ENCODE measurements at regions of chr21 and their contacts with region 1.

Region 1: DNA sequence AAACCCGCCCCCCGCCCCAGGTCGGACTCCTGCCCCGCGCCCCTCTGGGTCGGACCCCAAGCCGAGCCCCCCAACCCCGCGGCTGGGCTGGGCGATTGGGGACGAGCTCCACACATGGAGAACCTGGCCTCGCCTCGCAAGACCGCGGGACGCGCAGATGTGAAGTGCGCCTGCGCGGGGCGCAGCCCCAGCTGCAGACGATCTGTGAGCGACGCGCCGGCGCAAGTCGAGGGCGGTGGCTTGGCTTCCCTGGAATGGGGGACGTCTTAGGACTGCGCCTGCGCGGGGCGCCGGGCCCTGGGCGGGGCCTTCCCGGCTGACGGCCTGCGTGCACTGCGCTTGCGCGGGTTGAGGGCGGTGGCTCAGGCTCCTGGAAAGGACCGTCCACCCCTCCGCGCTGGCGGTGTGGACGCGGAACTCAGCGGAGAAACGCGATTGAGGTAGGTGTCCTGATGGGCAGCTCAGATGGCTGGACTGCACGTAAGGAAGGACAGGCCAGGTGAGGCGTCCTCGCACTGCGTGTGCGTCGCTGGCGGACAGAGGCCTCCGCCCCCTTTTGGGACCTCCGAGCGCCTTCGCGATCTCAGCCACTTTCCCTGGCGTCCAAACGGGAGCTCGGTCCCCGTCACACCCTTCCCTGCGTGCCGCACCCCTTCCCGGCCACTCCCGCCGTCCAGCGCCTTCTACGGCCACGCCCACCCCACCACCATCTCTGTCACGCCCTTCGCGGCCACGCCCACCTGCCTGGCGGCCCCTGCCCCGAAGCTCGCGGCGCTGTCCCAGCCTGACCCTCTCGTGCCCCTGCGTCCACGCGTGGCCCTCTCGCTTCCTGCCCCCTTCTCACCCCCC is at the start of gene PRMT2:
- DNase-seq: peak; percentile 98
- H3K4me3 Mint-ChIP-seq: peak within 1 kb of the TSS; percentile 90
- H3K27ac Mint-ChIP-seq: peak within 1 kb of the TSS; percentile 86
- H3K4me1 Mint-ChIP-seq: peaks cover 57% of the 10 kb centered on the region
- H3K27me3 Mint-ChIP-seq: no peaks in the 10 kb centered on the region
- total RNA-seq, gene PRMT2: 85.4 to 90.7 TPM

Region 2: DNA sequence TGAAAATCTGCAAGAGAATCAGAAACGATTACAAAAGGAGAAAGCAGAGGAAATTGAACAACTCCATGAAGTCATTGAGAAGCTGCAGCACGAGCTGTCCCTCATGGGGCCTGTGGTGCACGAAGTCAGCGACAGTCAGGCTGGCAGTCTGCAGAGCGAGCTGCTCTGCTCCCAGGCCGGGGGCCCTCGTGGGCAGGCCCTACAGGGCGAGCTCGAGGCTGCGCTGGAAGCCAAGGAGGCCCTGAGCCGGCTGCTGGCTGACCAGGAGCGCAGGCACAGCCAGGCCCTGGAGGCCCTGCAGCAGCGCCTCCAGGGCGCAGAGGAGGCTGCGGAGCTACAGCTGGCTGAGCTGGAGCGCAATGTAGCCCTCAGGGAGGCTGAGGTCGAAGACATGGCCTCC is 224.3 kb before region 1 on chr21:
- CTCF ChIA-PET with region 1: no interaction called
- POLR2A ChIA-PET with region 1: no interaction called
- intact Hi-C with region 1: no loop called
- DNase-seq: no peak
- H3K4me3 Mint-ChIP-seq: no peak overlapping the region
- H3K27ac Mint-ChIP-seq: no peak overlapping the region
- H3K4me1 Mint-ChIP-seq: peaks cover 3% of the 10 kb centered on the region
- H3K27me3 Mint-ChIP-seq: no peaks in the 10 kb centered on the region

Region 3: DNA sequence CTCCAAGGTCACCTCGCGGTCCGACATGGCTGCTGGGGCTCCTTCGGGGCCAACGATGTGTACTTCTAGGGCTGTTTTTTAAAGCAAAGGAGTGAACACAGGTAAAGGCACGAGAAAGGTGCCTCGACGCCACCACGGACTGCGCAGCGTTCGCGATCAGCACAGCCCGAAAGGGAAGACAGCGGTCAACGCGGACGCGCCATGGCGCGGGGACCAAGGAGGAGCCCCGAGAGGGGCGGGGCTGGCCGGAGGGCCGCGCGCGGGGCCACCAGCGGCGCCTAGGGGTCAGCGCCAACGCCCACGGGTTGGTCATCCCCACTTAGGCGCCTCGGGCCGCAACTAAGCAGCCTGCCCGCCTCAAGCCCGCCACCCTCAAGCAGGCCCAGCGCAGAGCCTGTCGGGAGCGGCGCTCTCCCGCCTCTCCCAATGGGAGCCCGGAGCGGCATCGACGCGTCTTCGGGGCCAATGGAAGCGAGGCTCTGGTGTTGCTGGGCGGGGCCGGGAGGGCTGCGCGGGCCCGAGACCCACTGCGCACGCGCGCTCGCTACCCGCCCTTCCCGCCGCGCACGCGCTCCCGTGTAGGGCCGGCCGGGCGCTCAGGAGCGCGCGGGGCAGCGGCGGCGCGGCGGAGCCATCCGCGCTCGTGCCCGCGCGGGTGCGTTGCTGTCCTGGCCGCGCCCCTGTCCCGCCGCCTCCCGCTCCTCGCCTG is 177.1 kb before region 1 on chr21 and contains the start of gene DIP2A:
- CTCF ChIA-PET with region 1: no interaction called
- POLR2A ChIA-PET with region 1: interaction called, 7 read pairs
- intact Hi-C with region 1: loop called (anchors 1 kb)
- DNase-seq: peak; percentile 96
- H3K4me3 Mint-ChIP-seq: peak within 1 kb of the TSS; percentile 90
- H3K27ac Mint-ChIP-seq: peak within 1 kb of the TSS; percentile 81
- H3K4me1 Mint-ChIP-seq: peaks cover 42% of the 10 kb centered on the region
- H3K27me3 Mint-ChIP-seq: no peaks in the 10 kb centered on the region
- total RNA-seq, gene DIP2A: 32.0 to 35.3 TPM

Region 4: GRCh38 chr21:46621457-46622182 is 13.9 kb before region 1 on chr21:
- CTCF ChIA-PET with region 1: interaction called, 6 read pairs
- POLR2A ChIA-PET with region 1: interaction called, 3 read pairs
- intact Hi-C with region 1: loop called (anchors 1 kb)
- DNase-seq: peak; percentile 28
- H3K4me3 Mint-ChIP-seq: no peak overlapping the region
- H3K27ac Mint-ChIP-seq: peak overlapping the region; percentile 84
- H3K4me1 Mint-ChIP-seq: peaks cover 34% of the 10 kb centered on the region
- H3K27me3 Mint-ChIP-seq: no peaks in the 10 kb centered on the region

Region 5: GRCh38 chr21:46675595-46676280 is 40.2 kb after region 1 on chr21:
- CTCF ChIA-PET with region 1: no interaction called
- POLR2A ChIA-PET with region 1: no interaction called
- intact Hi-C with region 1: no loop called
- DNase-seq: no peak
- H3K4me3 Mint-ChIP-seq: no peak overlapping the region
- H3K27ac Mint-ChIP-seq: no peak overlapping the region
- H3K4me1 Mint-ChIP-seq: no peaks in the 10 kb centered on the region
- H3K27me3 Mint-ChIP-seq: no peaks in the 10 kb centered on the region

Measured in activated CD4-positive, alpha-beta memory T cell treated with anti-CD3 and anti-CD28 coated beads for 36 hours (primary cell).